ENCODE measurements at regions of chr22 and their contacts with region 1.

Region 1: GRCh38 chr22:37643225-37643847 is 3.9 kb downstream of the SH3BP1 start:
- DNase-seq: no peak
- H3K4me3 ChIP-seq: peak overlapping the region in 1 of 4 donors; percentile 0
- H3K27ac ChIP-seq: peak overlapping the region in 3 of 4 donors; percentile 33 to 56 (median 44)
- H3K4me1 ChIP-seq: peaks cover 40 to 70% (median 56%) of the 10 kb centered on the region in 3 donors
- H3K27me3 ChIP-seq: no peaks in the 10 kb centered on the region
- CTCF ChIP-seq: peak; percentile 92 to 97 (median 94)
- POLR2A ChIP-seq: no peak

Region 2: GRCh38 chr22:37681556-37682049 is 38.3 kb after region 1 on chr22:
- intact Hi-C with region 1: loop called (anchors 5 kb)
- DNase-seq: no peak
- H3K4me3 ChIP-seq: no peak overlapping the region
- H3K27ac ChIP-seq: no peak overlapping the region
- H3K4me1 ChIP-seq: peaks cover 14 to 62% (median 26%) of the 10 kb centered on the region in 3 donors
- H3K27me3 ChIP-seq: no peaks in the 10 kb centered on the region
- CTCF ChIP-seq: peak; percentile 76 to 93 (median 85)
- POLR2A ChIP-seq: no peak

Measured in esophagus squamous epithelium (tissue), 5 donors.